ENCODE measurements at regions of chr12 and their contacts with region 1.

Region 1: GRCh38 chr12:91657032-91657431 is 474.4 kb upstream of the DCN start:
- DNase-seq: no peak
- ATAC-seq: no peak
- H3K4me3 ChIP-seq: no peak overlapping the region
- H3K4me3 Mint-ChIP-seq: no peak overlapping the region
- H3K27ac ChIP-seq: no peak overlapping the region
- H3K27ac Mint-ChIP-seq: no peak overlapping the region
- H3K4me1 ChIP-seq: no peaks in the 10 kb centered on the region
- H3K4me1 Mint-ChIP-seq: peaks cover 10 to 20% (median 13%) of the 10 kb centered on the region in 3 donors
- H3K27me3 ChIP-seq: no peaks in the 10 kb centered on the region
- H3K27me3 Mint-ChIP-seq: no peaks in the 10 kb centered on the region

Region 2: DNA sequence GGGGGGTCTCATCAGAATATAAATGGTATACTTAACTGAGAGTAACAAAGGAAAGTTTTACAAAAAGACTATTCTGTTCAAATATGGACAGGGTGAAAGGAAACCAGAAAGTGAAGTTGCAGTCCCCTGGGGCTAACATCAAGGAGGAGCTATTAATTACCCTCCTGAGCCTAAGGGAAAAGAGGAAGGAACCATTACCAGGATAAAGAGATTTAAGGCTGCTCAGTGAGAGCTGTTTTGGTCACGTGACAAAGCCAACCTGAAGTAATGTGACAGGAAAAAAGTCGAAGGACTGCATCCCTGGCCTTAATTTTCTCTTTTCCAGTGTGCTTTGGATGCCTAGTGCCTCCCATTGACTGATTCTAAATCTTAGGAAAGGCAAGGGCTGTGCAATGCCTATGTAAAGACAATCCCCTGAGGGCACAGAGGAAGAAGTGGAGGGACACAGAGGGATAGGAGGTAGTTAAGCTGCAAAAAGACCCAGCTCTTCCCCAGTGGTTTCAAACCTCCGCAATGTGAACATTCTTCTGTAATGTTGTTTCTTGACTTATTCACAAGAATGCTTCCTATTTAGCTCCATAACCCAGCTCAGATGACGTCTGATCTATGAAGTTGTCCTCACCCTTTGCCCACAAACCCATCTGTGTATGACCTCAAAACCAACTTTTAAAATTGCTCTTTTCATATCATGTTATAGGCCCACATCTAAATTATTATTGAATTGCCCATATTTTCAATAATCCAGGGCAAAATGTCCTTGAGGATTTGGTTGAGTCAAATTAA is 286.8 kb before region 1 on chr12:
- CTCF ChIA-PET with region 1: no interaction called
- POLR2A ChIA-PET with region 1: interaction called in 1 of 2 experiments, 11 read pairs
- DNase-seq: peak in 1 of 35 experiments; percentile 4
- ATAC-seq: no peak
- H3K4me3 ChIP-seq: no peak overlapping the region
- H3K4me3 Mint-ChIP-seq: no peak overlapping the region
- H3K27ac ChIP-seq: no peak overlapping the region
- H3K27ac Mint-ChIP-seq: no peak overlapping the region
- H3K4me1 ChIP-seq: no peaks in the 10 kb centered on the region
- H3K4me1 Mint-ChIP-seq: no peaks in the 10 kb centered on the region
- H3K27me3 ChIP-seq: peaks cover 0 to 7% of the 10 kb centered on the region in 2 experiments
- H3K27me3 Mint-ChIP-seq: peaks cover 6 to 9% of the 10 kb centered on the region in 2 donors

Region 3: DNA sequence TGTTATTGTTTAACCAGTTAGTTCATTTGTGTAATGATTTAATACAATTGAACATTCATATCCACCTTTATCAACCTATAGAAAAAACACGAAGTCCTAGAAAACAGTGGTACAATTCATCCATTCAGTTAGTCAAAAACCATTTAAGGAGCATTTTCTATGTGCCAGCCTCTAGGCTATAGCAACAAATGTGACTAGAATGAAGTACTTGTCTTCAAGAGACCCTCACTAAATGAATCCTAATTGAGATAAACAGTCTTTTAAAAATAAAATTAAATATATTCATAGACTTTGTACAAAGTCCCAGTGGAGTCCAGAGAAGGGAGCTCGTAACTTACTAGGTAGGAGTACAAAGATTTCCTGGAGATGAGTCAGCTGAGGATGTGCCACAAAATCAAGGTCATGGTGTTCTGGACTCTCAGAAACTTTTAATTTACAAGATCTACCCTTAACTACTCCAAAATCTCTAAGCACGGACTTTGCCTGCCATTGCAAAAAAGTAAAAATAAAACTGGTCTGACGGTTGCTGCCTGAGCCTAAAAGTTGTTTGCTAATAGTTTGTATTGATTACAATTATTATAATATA is 43.7 kb before region 1 on chr12:
- CTCF ChIA-PET with region 1: no interaction called
- POLR2A ChIA-PET with region 1: no interaction called
- DNase-seq: no peak
- ATAC-seq: no peak
- H3K4me3 ChIP-seq: no peak overlapping the region
- H3K4me3 Mint-ChIP-seq: no peak overlapping the region
- H3K27ac ChIP-seq: no peak overlapping the region
- H3K27ac Mint-ChIP-seq: no peak overlapping the region
- H3K4me1 ChIP-seq: no peaks in the 10 kb centered on the region
- H3K4me1 Mint-ChIP-seq: peaks cover 5 to 14% (median 7%) of the 10 kb centered on the region in 3 donors
- H3K27me3 ChIP-seq: no peaks in the 10 kb centered on the region
- H3K27me3 Mint-ChIP-seq: no peaks in the 10 kb centered on the region

Region 4: GRCh38 chr12:92170050-92170449 is 513.0 kb after region 1 on chr12:
- CTCF ChIA-PET with region 1: no interaction called
- POLR2A ChIA-PET with region 1: interaction called in 1 of 2 experiments, 10 read pairs
- DNase-seq: no peak
- ATAC-seq: no peak
- H3K4me3 ChIP-seq: no peak overlapping the region
- H3K4me3 Mint-ChIP-seq: no peak overlapping the region
- H3K27ac ChIP-seq: no peak overlapping the region
- H3K27ac Mint-ChIP-seq: peak overlapping the region; percentile 5 to 6
- H3K4me1 ChIP-seq: peaks cover 2 to 5% of the 10 kb centered on the region in 2 experiments
- H3K4me1 Mint-ChIP-seq: peaks cover 20 to 42% (median 28%) of the 10 kb centered on the region in 3 donors
- H3K27me3 ChIP-seq: no peaks in the 10 kb centered on the region
- H3K27me3 Mint-ChIP-seq: no peaks in the 10 kb centered on the region